MCF 10A (cell line): ENCODE measurements at regions of chr2 and their contacts with region 1.

Region 1: DNA sequence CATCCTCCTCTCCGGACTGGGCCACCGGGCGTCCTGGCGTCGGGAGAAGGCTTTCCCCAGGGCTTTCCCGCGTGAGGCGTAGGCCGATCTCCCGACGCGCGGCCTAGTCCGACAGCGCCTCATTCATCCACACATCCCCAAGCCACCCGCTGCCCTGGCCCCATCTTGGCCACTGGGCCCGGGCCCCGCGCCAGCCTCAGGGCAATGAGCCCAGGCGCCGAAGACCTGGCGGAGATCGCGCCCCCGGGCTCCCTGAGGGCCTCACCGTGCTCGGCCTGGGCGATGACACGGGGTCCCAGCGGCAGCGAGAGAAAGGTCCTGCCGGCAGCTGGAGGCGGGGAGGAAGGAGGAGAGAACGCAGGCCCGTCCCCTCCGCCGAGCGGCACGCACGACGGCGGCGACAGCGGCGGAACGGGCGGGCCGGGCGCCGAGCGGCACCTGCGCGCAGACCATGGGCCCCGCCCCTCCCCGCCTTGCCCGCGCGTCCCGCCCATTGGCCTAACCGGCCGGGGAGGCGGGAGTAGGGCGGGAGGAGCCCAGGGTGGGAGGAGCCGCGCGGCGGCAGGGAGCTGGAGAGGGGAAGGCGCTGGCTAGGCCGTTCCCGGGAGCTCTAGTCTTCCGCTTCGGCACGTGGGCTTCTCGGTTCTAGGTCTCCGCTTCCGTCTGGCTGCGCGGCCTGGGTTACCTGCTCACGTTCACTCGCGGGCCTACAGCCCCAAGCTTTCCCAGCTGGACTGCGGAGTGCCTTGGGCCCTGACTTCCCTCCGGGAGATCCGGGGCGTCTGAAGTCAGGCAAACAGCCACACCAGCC is at the start of gene OLA1:
- DNase-seq: peak; percentile 96
- H3K4me3 Mint-ChIP-seq: peak within 1 kb of the TSS; percentile 94
- H3K27ac Mint-ChIP-seq: peak within 1 kb of the TSS; percentile 94
- H3K4me1 Mint-ChIP-seq: peaks cover 13% of the 10 kb centered on the region
- H3K27me3 Mint-ChIP-seq: no peaks in the 10 kb centered on the region
- CTCF ChIP-seq: no peak
- total RNA-seq, gene OLA1: 169 and 224 TPM in 2 replicates

Region 2: DNA sequence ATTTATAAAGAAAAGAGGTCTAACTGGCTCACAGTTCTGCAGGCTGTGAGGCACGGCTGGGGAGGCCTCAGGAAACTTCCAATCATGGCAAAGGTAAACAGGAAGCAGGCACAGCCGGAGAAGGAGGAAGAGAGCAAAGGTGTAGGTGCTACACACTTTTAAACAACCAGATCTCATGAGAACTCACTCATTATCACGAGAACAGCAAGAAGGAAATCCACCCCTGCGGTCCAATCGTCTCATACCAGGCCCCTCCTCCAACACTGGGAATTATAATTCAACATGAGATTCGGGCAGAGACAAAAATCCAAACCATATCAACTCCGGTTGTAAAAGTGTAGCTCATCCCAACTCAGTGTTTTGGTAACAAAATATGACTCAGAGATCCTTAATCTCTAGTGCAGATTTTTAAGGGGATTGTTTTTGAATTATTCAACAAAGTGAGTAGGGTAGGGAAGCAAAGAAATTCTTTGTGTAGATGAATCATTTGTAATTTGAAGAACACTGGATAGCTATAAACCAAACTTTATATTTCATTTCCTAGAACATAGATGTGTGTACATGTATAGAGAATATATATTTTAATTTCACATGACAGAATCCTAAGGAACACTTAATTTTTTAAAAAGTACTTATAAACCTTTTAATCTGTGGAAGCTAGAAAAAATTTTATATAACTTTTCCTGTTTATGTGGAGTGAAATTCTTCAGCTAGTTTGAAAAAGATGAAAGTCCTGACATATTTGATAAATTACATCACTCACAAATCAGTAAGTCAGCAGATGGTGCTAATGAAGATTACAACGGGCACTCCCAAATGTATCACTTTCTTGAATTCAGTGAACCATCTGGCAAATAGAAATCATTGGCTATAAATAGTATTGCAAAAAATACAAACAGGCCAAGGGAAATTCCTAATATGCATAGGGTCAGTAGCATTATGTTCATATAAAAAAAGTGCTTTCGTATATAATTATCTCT is 130.2 kb before region 1 on chr2:
- CTCF ChIA-PET with region 1: no interaction called
- POLR2A ChIA-PET with region 1: interaction called, 5 read pairs
- intact Hi-C with region 1: loop called (anchors 2 kb)
- DNase-seq: peak; percentile 47
- H3K4me3 Mint-ChIP-seq: peak overlapping the region; percentile 8
- H3K27ac Mint-ChIP-seq: peak overlapping the region; percentile 79
- H3K4me1 Mint-ChIP-seq: peaks cover 21% of the 10 kb centered on the region
- H3K27me3 Mint-ChIP-seq: no peaks in the 10 kb centered on the region
- CTCF ChIP-seq: no peak

Region 3: GRCh38 chr2:174235680-174236079 is 12.7 kb before region 1 on chr2:
- CTCF ChIA-PET with region 1: interaction called, 4 read pairs
- POLR2A ChIA-PET with region 1: interaction called, 65 read pairs
- intact Hi-C with region 1: no loop called
- DNase-seq: peak; percentile 13
- H3K4me3 Mint-ChIP-seq: no peak overlapping the region
- H3K27ac Mint-ChIP-seq: peak overlapping the region; percentile 21
- H3K4me1 Mint-ChIP-seq: peaks cover 28% of the 10 kb centered on the region
- H3K27me3 Mint-ChIP-seq: no peaks in the 10 kb centered on the region
- CTCF ChIP-seq: no peak

Region 4: GRCh38 chr2:174259981-174260380 is 11.6 kb after region 1 on chr2:
- CTCF ChIA-PET with region 1: interaction called, 5 read pairs
- POLR2A ChIA-PET with region 1: interaction called, 25 read pairs
- intact Hi-C with region 1: loop called (anchors 2 kb)
- DNase-seq: peak; percentile 90
- H3K4me3 Mint-ChIP-seq: no peak overlapping the region
- H3K27ac Mint-ChIP-seq: no peak overlapping the region
- H3K4me1 Mint-ChIP-seq: peaks cover 7% of the 10 kb centered on the region
- H3K27me3 Mint-ChIP-seq: no peaks in the 10 kb centered on the region
- CTCF ChIP-seq: no peak

Region 5: GRCh38 chr2:174442546-174443510 is 194.4 kb after region 1 on chr2:
- CTCF ChIA-PET with region 1: no interaction called
- POLR2A ChIA-PET with region 1: no interaction called
- intact Hi-C with region 1: no loop called
- DNase-seq: peak; percentile 50
- H3K4me3 Mint-ChIP-seq: no peak overlapping the region
- H3K27ac Mint-ChIP-seq: peak overlapping the region; percentile 69
- H3K4me1 Mint-ChIP-seq: peaks cover 6% of the 10 kb centered on the region
- H3K27me3 Mint-ChIP-seq: no peaks in the 10 kb centered on the region
- CTCF ChIP-seq: no peak